Lower lobe of right lung (tissue), 2 donors: ENCODE measurements at regions of chr11 and their contacts with region 1.

Region 1: DNA sequence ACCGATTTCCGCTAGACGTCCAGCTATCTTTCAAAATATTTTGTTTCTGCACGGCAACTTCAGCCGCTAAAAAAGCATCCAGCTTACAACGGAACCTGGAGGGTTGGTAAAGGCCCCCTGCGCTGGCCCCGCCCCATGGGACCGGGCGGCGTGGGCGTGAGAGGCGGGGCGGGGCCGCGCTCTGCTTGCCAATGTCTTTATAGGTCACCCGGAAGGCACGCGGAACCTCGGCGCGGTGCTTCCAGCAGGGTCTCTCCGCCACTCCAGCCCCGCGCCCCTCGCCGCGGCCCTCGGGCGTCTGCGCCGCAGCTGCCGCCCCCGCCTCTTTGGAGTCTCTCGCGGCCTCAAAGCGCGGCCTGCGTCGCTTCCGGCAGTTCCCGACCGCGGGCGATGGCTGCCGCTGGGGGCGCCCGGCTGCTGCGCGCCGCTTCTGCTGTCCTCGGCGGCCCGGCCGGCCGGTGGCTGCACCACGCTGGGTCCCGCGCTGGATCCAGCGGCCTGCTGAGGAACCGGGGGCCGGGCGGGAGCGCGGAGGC is at the start of gene FDX1:
- DNase-seq: peak; percentile 93
- ATAC-seq: peak; percentile 95
- H3K4me3 ChIP-seq: peak within 1 kb of the TSS; percentile 85
- H3K27ac ChIP-seq: peak within 1 kb of the TSS; percentile 92
- H3K4me1 ChIP-seq: peaks cover 40% of the 10 kb centered on the region
- H3K27me3 ChIP-seq: no peaks in the 10 kb centered on the region
- CTCF ChIP-seq: peak; percentile 67
- total RNA-seq, gene FDX1: 19.5 TPM

Region 2: DNA sequence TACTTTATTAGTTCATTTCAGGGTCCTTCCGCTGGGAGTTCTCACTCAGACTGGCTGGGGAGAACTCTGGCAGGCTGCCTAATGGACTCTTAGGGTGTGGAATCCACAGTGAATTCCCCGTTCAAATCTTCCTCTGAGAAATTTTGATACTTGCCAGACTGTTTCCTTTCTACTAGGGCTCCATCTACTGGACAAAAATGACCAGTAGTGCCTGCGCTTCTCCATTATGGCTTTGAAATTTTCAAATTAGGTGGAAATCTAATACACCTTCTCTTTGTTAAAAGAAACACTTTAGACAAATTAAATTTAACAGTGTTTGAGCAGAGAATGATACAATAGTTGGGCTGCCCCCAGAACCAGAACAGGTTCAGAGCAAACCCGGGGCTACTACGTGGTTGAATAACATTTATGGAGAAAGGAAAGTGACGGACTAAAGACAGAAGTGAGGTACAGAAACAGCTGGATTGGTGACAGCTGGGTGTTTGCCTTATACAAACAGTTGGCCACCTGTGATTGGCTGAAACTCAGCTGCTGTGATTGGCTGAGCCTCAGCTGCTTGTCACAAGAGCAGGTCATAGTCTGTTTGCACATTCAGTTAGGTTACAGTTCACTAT is 53.0 kb before region 1 on chr11:
- intact Hi-C with region 1: loop called (anchors 10 kb)
- DNase-seq: peak; percentile 74
- ATAC-seq: peak; percentile 88 to 93
- H3K4me3 ChIP-seq: peak overlapping the region; percentile 28
- H3K27ac ChIP-seq: peak overlapping the region; percentile 56
- H3K4me1 ChIP-seq: peaks cover 31% of the 10 kb centered on the region
- H3K27me3 ChIP-seq: no peaks in the 10 kb centered on the region
- CTCF ChIP-seq: peak; percentile 82